ENCODE measurements at regions of chr4 and their contacts with region 1.

Region 1: DNA sequence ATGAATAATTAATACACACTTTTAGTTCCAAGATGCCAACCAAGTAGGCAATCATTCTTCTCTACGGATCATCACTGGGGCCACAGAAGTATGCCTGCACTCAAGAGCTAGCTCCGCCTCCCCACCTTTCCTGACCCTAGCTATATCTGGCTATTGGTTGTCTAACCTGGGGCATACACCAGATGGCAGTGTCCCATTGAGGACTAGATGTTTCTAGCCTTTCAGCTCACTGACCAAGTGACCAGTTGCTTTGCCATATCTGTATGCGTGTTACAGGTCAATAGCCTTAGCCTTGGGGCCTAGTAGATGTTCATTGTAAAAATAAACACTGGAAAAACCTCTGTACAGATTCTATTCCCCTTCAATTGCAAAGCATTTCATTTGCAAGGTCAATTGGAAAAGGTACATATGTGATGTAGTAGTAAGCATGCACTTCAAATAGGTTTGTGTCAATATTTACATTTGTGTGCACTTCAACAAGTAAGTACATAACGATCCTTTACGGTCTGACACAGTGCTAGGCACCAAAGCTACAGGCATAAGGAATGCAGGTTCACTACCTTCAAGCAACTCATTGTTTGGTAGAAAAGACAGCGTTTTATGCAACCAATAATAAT is 521.7 kb downstream of the PPARGC1A start:
- DNase-seq: no peak
- ATAC-seq: peak; percentile 87

Region 2: DNA sequence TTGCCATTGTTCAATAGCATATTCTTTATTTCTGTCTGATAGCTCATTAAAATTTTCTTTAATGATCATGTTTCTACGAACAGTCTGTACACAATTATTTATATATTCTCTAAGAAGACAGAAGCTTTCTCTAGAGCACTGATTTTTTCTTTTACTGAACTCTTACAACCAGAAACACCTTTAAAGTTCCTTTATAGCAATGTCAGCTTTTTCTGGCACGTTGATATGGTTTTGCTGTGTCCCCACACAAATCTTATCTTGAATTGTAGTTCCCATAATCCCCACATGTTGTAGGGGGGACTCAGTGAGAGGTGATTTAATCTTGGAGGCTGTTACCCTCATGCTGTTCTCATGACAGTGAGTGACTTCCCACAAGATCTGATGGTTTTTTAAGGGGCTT is 222.2 kb after region 1 on chr4:
- intact Hi-C with region 1: no loop called
- DNase-seq: no peak
- ATAC-seq: no peak

Region 3: DNA sequence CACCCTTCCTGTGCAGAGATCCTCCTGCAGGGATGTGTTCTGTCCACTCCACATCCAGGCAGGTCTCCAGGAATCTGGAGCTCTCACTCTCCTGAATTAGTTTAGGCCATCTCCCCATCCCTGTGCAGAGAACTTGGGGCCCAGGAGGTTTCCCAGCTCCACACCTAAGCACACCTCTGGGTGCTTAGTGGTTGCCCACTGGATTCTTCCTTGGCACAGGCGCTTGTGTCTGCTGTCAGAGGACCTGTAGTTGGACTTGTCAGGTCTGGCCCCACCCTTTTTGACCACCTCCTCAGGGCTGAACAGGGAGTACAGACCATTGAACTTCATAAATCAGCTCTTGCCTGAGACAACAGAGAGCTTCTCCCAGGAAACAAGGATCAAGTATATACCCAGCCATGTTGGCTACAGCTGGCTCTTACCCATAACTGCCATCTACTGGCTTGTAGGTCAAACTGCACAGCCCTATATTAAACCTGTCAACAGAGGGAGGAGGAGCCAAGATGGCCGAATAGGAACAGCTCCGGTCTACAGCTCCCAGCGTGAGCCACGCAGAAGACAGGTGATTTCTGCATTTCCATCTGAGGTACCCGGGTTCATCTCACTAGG is 246.2 kb after region 1 on chr4:
- intact Hi-C with region 1: loop called (anchors 5 kb)
- DNase-seq: no peak
- ATAC-seq: peak; percentile 52

Region 4: DNA sequence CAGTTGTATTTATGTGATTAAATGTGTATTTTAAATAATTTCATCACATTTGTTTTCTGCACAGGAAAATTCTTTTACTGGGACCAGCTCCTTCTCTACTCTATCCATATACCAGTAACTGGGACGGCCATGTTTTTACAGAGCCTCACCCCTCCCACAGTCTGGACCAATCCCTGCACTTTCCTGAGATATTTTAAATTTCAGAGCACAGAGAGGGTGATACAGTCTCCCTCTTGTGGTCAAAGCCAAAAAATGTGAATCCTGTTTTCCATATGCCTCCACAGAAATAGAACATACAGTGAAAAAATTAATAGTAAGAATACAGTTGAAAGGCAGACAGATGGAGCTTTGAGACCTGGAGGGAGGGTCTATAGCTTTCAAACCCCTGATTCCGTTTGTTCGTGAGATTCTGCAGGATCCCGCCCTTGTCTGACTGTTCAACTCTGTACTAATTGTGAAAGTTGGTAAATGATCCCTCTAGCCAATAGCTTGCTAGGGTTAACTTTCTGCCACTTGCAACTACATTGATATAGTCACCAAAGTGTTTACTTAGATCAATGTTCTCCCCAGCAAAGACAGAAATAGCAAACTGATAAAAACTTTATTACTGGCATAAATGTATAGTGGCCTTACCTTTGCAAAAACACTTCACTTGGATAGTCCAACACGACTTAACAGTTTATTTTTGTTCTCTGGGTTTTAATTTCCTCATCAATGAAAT is 349.5 kb after region 1 on chr4:
- intact Hi-C with region 1: loop called (anchors 10 kb)
- DNase-seq: no peak
- ATAC-seq: no peak

Region 5: GRCh38 chr4:23835774-23836478 is 467.7 kb after region 1 on chr4:
- intact Hi-C with region 1: no loop called
- DNase-seq: no peak
- ATAC-seq: no peak

Measured in Right ventricle myocardium inferior (tissue), 1 donor.